ENCODE measurements at regions of chr7 and their contacts with region 1.

Region 1: DNA sequence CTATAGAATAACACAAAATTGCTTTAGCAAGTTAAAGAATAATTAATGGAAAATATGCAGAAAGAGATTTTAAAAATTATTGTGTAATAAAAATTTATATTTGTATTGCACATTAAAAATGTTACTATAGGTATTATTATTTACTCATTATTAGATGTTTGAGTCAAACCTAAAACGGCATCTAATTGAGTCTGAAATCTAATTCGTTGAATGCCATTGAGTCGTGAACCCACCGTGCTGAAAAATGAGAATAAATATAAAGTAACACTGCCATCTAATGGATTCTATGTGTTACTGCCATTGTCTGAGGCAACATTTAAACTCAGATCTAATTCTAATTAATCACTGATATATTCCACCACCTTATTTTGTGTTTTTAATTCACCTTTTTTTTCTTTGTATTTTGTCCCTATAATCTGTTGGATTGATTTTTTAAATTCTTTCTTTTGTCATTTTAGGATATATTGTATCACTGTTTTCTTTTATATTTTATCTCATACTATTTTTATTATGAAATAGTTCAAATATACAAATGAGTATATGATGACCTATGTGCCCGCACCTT is 62.2 kb downstream of the SAMD9 start:
- DNase-seq: no peak
- ATAC-seq: peak; percentile 78
- H3K4me3 ChIP-seq: no peak overlapping the region
- H3K27ac ChIP-seq: no peak overlapping the region
- H3K4me1 ChIP-seq: no peaks in the 10 kb centered on the region
- H3K27me3 ChIP-seq: no peaks in the 10 kb centered on the region
- CTCF ChIP-seq: peak; percentile 87

Region 2: GRCh38 chr7:92621026-92621540 is 434.5 kb before region 1 on chr7:
- intact Hi-C with region 1: loop called (anchors 10 kb)
- DNase-seq: no peak
- ATAC-seq: peak; percentile 95
- H3K4me3 ChIP-seq: no peak overlapping the region
- H3K27ac ChIP-seq: peak overlapping the region; percentile 2
- H3K4me1 ChIP-seq: peaks cover 8% of the 10 kb centered on the region
- H3K27me3 ChIP-seq: no peaks in the 10 kb centered on the region
- CTCF ChIP-seq: peak; percentile 76

Region 3: GRCh38 chr7:93132216-93132615 is 76.6 kb after region 1 on chr7:
- intact Hi-C with region 1: no loop called
- DNase-seq: no peak
- ATAC-seq: no peak
- H3K4me3 ChIP-seq: no peak overlapping the region
- H3K27ac ChIP-seq: no peak overlapping the region
- H3K4me1 ChIP-seq: no peaks in the 10 kb centered on the region
- H3K27me3 ChIP-seq: no peaks in the 10 kb centered on the region
- CTCF ChIP-seq: no peak

Measured in upper lobe of right lung (tissue), 1 donor.